Activated CD4-positive, alpha-beta memory T cell treated with anti-CD3 and anti-CD28 coated beads for 36 hours (primary cell): ENCODE measurements at regions of chr5 and their contacts with region 1.

Region 1: DNA sequence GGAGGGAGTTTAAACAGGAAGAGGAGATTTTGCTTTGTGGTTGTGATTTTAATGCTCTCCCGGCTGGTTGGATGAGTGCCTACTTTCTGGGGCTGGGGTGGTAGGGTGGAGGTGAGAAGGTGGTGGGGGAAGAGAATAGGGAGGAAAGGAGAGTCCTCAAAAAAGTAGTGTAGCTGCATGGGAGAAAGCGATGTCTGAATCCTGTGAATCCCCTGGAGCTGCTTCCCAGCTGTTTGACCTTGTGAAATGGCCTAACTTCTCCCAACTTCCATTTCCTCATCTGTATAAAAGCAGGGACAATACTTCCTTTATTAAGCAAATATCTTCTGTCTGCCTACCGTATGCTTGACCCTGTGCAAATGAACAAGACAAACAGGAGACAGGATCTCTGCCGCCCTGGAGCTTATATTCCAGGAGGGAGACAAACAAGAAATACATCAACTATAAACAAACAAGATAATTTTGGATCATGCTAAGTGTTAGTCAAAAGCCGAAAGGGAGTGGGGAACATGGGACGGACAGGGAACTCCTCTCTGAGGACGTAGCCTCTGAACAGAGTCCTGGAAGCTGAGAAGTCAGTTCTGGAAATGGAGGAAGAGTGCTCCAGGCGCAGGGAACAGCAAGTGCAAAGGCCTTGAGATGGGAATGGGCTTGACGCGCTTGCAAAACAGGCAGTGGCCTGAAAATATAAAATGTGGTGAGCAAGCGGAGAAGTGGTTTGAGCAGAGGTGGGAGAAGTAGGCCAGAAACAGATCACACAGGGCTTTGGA is 103.5 kb downstream of the SPRY4 start:
- DNase-seq: no peak
- H3K4me3 Mint-ChIP-seq: no peak overlapping the region
- H3K27ac Mint-ChIP-seq: no peak overlapping the region
- H3K4me1 Mint-ChIP-seq: peaks cover 29% of the 10 kb centered on the region
- H3K27me3 Mint-ChIP-seq: no peaks in the 10 kb centered on the region

Region 2: GRCh38 chr5:141889282-141889871 is 331.9 kb before region 1 on chr5:
- CTCF ChIA-PET with region 1: no interaction called
- POLR2A ChIA-PET with region 1: no interaction called
- intact Hi-C with region 1: no loop called
- DNase-seq: no peak
- H3K4me3 Mint-ChIP-seq: no peak overlapping the region
- H3K27ac Mint-ChIP-seq: no peak overlapping the region
- H3K4me1 Mint-ChIP-seq: no peaks in the 10 kb centered on the region
- H3K27me3 Mint-ChIP-seq: peaks cover 25% of the 10 kb centered on the region

Region 3: GRCh38 chr5:142324871-142325724 is 103.8 kb after region 1 on chr5 and contains the start of gene SPRY4:
- CTCF ChIA-PET with region 1: no interaction called
- POLR2A ChIA-PET with region 1: no interaction called
- intact Hi-C with region 1: loop called (anchors 2 kb)
- DNase-seq: peak; percentile 94
- H3K4me3 Mint-ChIP-seq: peak within 1 kb of the TSS; percentile 78
- H3K27ac Mint-ChIP-seq: no peak within 1 kb of the TSS
- H3K4me1 Mint-ChIP-seq: peaks cover 26% of the 10 kb centered on the region
- H3K27me3 Mint-ChIP-seq: peaks cover 48% of the 10 kb centered on the region
- total RNA-seq, gene SPRY4: 1.1 to 1.2 TPM

Region 4: DNA sequence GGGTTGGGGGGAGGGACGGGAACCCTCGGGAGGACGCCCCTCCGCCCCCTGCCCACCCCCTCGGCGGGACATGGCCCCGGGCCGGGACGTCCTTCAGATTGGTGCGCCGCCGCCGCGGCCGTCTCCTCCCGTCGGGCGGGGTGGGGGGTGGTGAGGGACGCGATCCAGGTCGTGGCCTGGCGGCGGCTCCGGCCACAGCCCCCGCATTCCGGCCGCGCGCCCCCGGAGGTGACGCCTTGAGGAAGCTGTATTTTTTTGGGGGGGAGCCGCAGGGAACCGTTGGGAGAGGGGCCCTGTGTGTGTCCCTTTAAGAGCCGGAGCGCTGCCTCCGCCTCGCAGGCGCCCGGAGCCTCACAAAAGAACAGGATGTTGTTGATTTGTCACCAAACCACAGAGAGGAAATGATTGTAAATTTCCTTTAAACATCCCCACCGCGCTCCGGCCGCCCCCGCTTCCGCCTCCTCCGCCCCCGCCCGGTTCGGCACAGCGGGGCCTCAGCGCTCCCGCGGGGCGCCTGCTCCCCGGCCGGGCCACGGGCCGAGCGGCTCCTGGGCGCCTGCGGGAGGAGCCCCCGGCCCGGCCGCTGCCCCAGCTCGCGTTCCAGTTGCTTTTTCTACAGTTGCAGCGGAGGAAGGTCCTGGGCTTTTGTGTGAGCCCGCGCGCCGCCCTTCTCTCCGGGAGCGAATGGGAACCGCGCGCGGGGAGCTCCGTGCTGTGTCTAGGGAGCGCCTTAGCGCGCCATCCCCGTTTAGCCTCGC is 135.6 kb after region 1 on chr5:
- CTCF ChIA-PET with region 1: no interaction called
- POLR2A ChIA-PET with region 1: no interaction called
- intact Hi-C with region 1: loop called (anchors 2 kb)
- DNase-seq: peak; percentile 95
- H3K4me3 Mint-ChIP-seq: peak overlapping the region; percentile 71
- H3K27ac Mint-ChIP-seq: peak overlapping the region; percentile 91
- H3K4me1 Mint-ChIP-seq: peaks cover 38% of the 10 kb centered on the region
- H3K27me3 Mint-ChIP-seq: no peaks in the 10 kb centered on the region

Region 5: GRCh38 chr5:142499591-142500226 is 278.4 kb after region 1 on chr5:
- CTCF ChIA-PET with region 1: no interaction called
- POLR2A ChIA-PET with region 1: no interaction called
- intact Hi-C with region 1: loop called (anchors 5 kb)
- DNase-seq: no peak
- H3K4me3 Mint-ChIP-seq: no peak overlapping the region
- H3K27ac Mint-ChIP-seq: no peak overlapping the region
- H3K4me1 Mint-ChIP-seq: peaks cover 12% of the 10 kb centered on the region
- H3K27me3 Mint-ChIP-seq: no peaks in the 10 kb centered on the region